Activated T-helper 2 cell treated with anti-CD3 and anti-CD28 coated beads, Interferon-gamma antibody, Interleukin-2, Interleukin-4, amounts not matched to agents 10 μg/mL and 5 μg/mL and 100 μg/mL, durations not matched to agents 14 hours and 24 hours and 36 hours (primary cell): ENCODE measurements at regions of chr11 and their contacts with region 1.

Region 1: GRCh38 chr11:36702330-36703055 is 104.5 kb upstream of the RAG2 start:
- DNase-seq: no peak
- H3K4me3 Mint-ChIP-seq: no peak overlapping the region
- H3K27ac Mint-ChIP-seq: no peak overlapping the region
- H3K4me1 Mint-ChIP-seq: peaks cover 4% of the 10 kb centered on the region
- H3K27me3 Mint-ChIP-seq: peaks cover 14% of the 10 kb centered on the region

Region 2: DNA sequence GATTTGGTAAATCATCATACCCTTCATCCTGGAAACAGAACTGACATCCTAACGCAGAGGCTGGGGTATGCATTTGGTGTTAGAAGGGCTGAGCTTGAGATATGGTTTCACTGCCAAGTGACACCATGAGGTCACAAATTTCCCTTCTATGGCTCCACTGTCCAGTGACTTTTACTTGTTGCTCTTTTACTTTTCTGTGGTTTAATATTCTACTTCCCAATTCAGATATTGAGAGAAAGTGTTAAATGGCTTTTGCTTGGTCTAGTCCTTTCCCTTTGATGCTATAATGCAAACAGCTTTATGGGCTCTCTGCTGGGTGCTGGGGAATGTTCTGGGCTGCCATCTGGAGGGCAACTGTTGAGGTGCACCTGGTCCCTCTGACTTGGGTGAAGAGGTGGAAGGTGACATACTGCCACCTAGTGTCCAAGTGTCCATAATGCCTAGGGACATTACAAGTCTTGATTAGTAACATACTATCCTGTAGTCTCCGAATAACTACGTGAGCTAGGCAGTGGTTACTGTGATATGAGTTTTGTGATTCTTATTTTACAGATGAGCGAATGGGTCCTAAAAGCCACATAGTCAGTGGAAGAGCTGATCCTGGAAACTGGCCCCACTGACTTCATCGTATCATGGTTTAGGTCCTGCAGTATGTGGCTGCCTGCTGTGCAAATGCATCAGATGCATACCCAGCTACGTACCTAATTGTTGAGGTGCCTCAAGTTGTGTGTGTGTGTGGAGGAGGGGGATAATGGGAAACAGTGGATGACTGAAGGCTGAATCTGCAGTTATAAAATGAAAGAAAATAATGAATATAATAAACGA is 44.6 kb after region 1 on chr11:
- intact Hi-C with region 1: loop called (anchors 1 kb)
- DNase-seq: peak; percentile 80
- H3K4me3 Mint-ChIP-seq: no peak overlapping the region
- H3K27ac Mint-ChIP-seq: no peak overlapping the region
- H3K4me1 Mint-ChIP-seq: peaks cover 6% of the 10 kb centered on the region
- H3K27me3 Mint-ChIP-seq: peaks cover 12% of the 10 kb centered on the region

Region 3: GRCh38 chr11:37223962-37224361 is 521.5 kb after region 1 on chr11:
- intact Hi-C with region 1: no loop called
- DNase-seq: no peak
- H3K4me3 Mint-ChIP-seq: no peak overlapping the region
- H3K27ac Mint-ChIP-seq: no peak overlapping the region
- H3K4me1 Mint-ChIP-seq: no peaks in the 10 kb centered on the region
- H3K27me3 Mint-ChIP-seq: no peaks in the 10 kb centered on the region